K562 (cell line): ENCODE measurements at regions of chr12 and their contacts with region 1.

Region 1: DNA sequence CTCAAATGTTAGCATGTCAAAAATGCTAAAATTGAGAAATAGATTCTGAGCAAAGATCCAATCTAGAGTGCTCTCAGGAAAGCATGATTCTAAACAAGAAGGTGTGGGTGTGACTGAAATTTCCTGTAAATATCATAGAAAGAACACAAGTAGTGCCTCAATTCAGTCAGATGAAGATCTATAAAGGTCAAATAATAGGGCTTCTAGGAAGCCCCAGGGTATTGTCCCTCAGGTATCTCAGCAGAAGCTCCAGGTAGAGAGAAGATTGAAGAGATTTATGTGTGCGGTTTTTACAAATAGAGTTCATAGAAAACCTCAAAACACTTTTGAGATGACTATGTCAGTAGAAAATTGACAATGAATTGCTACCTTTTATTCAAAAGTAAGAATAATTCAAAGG is 13.0 kb downstream of the KLRD1 start:
- DNase-seq: no peak
- ATAC-seq: no peak
- H3K4me3 ChIP-seq: no peak overlapping the region
- H3K27ac ChIP-seq: no peak overlapping the region
- H3K4me1 ChIP-seq: no peaks in the 10 kb centered on the region
- H3K27me3 ChIP-seq: no peaks in the 10 kb centered on the region
- CTCF ChIP-seq: no peak
- EP300 ChIP-seq: no peak
- POLR2A ChIP-seq: no peak
- RAD21 ChIP-seq: no peak

Region 2: DNA sequence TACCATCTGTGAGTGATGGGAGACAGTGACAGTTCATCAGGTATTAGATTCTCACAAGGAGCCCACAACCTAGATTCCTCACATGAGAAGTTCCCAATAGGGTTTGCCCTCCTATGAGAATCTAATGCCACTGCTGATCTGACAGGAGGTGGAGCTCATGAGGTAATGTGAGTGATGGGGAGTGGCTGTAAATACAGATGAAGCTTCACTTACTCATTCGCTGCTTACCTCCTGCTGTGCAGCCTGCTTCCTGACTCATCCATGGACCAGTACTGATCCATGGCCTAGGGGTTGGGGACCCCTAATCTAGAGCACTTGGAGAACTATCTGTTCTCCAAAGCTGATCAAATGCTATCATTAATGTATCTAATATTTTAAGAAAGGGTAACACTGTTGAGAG is 633.4 kb before region 1 on chr12:
- CTCF ChIA-PET with region 1: no interaction called
- POLR2A ChIA-PET with region 1: no interaction called
- in situ Hi-C with region 1: no loop called
- intact Hi-C with region 1: no loop called
- DNase-seq: peak; percentile 8 to 75 (median 15)
- ATAC-seq: peak; percentile 68
- H3K4me3 ChIP-seq: no peak overlapping the region
- H3K27ac ChIP-seq: no peak overlapping the region
- H3K4me1 ChIP-seq: peaks cover 4 to 14% of the 10 kb centered on the region in 2 experiments; a peak in 3 of 5 replicates
- H3K27me3 ChIP-seq: no peaks in the 10 kb centered on the region
- CTCF ChIP-seq: no peak
- EP300 ChIP-seq: no peak
- POLR2A ChIP-seq: no peak
- RAD21 ChIP-seq: no peak

Region 3: GRCh38 chr12:10540776-10541205 is 220.1 kb after region 1 on chr12:
- CTCF ChIA-PET with region 1: no interaction called
- POLR2A ChIA-PET with region 1: no interaction called
- in situ Hi-C with region 1: loop called (anchors 10 kb)
- intact Hi-C with region 1: no loop called
- DNase-seq: no peak
- ATAC-seq: no peak
- H3K4me3 ChIP-seq: no peak overlapping the region
- H3K27ac ChIP-seq: no peak overlapping the region
- H3K4me1 ChIP-seq: no peaks in the 10 kb centered on the region
- H3K27me3 ChIP-seq: no peaks in the 10 kb centered on the region
- CTCF ChIP-seq: no peak
- EP300 ChIP-seq: no peak
- POLR2A ChIP-seq: no peak
- RAD21 ChIP-seq: no peak